ENCODE measurements at regions of chr16 and their contacts with region 1.

Region 1: DNA sequence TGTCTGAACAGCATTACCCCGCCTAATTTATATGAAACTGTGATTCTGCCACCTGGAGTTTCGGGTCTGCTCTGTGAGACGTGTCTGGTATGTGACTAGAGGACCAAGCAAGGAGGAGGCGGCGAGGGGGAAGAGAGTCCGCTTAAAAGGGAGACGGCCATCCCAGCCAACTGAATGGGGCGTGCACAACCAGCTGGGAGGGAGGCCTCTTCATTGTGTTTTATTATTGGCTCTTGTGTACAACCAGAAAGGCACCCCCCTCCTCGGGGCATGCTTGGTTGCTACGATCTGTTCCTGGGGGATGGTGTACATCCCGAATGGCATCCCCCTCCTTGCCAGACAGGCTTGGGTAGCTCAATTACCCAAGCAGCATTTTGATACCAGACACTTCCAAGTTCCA is 384.5 kb upstream of the SALL1 start:
- DNase-seq: no peak
- ATAC-seq: no peak
- H3K4me3 ChIP-seq: no peak overlapping the region
- H3K4me3 Mint-ChIP-seq: no peak overlapping the region
- H3K27ac ChIP-seq: no peak overlapping the region
- H3K27ac Mint-ChIP-seq: no peak overlapping the region
- H3K4me1 ChIP-seq: no peaks in the 10 kb centered on the region
- H3K4me1 Mint-ChIP-seq: no peaks in the 10 kb centered on the region
- H3K27me3 ChIP-seq: no peaks in the 10 kb centered on the region
- H3K27me3 Mint-ChIP-seq: no peaks in the 10 kb centered on the region
- CTCF ChIP-seq: no peak

Region 2: DNA sequence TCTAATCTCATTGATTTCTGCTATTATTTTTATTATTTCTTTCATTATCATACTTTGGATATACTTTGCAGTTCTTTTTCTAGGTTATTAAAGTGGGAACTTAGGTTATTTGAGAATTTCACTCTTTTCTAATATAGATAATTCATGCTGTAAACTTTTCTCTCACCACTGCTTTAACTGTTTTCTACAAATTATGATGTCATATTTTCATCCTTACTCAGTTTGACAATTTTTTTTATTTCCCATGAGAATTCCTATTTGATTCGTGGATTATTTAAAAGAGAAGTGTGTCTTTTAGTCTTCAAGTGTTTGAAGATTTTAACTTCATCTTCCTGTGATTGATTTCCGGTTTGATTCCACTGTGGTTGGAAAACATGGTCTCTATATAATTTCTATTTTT is 47.7 kb before region 1 on chr16:
- CTCF ChIA-PET with region 1: no interaction called
- POLR2A ChIA-PET with region 1: no interaction called
- intact Hi-C with region 1: no loop called
- DNase-seq: no peak
- ATAC-seq: no peak
- H3K4me3 ChIP-seq: no peak overlapping the region
- H3K4me3 Mint-ChIP-seq: no peak overlapping the region
- H3K27ac ChIP-seq: no peak overlapping the region
- H3K27ac Mint-ChIP-seq: no peak overlapping the region
- H3K4me1 ChIP-seq: no peaks in the 10 kb centered on the region
- H3K4me1 Mint-ChIP-seq: no peaks in the 10 kb centered on the region
- H3K27me3 ChIP-seq: no peaks in the 10 kb centered on the region
- H3K27me3 Mint-ChIP-seq: no peaks in the 10 kb centered on the region
- CTCF ChIP-seq: no peak

Region 3: DNA sequence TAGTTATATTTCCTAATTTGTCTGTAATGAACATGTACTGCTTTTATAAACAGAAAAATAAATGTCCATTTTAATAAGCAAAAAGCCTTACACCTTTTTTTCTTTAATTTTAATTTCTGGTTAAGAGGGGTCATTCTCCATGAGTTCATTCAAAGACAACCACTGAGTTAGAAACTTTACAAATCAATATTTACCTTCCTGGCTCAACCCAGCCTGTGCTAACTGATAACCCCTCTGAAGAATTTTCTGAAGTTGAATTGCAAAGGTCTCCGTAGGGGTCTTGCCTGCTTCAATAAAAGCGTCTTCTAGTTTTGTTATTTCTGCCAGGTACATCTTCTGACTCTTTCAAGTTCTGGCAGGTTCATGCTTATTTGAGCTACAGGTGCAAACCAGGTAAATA is 55.9 kb after region 1 on chr16:
- CTCF ChIA-PET with region 1: no interaction called
- POLR2A ChIA-PET with region 1: no interaction called
- intact Hi-C with region 1: loop called in 1 of 2 experiments (anchors 2 kb)
- DNase-seq: no peak
- ATAC-seq: no peak
- H3K4me3 ChIP-seq: no peak overlapping the region
- H3K4me3 Mint-ChIP-seq: no peak overlapping the region
- H3K27ac ChIP-seq: no peak overlapping the region
- H3K27ac Mint-ChIP-seq: no peak overlapping the region
- H3K4me1 ChIP-seq: no peaks in the 10 kb centered on the region
- H3K4me1 Mint-ChIP-seq: no peaks in the 10 kb centered on the region
- H3K27me3 ChIP-seq: no peaks in the 10 kb centered on the region
- H3K27me3 Mint-ChIP-seq: no peaks in the 10 kb centered on the region
- CTCF ChIP-seq: no peak